ENCODE measurements at regions of chr5 and their contacts with region 1.

Region 1: GRCh38 chr5:55172051-55172899 is 702 bp downstream of the CDC20B start:
- DNase-seq: peak; percentile 75
- H3K4me3 Mint-ChIP-seq: peak overlapping the region; percentile 80
- H3K27ac Mint-ChIP-seq: no peak overlapping the region
- H3K4me1 Mint-ChIP-seq: peaks cover 39% of the 10 kb centered on the region
- H3K27me3 Mint-ChIP-seq: peaks cover 60% of the 10 kb centered on the region

Region 2: DNA sequence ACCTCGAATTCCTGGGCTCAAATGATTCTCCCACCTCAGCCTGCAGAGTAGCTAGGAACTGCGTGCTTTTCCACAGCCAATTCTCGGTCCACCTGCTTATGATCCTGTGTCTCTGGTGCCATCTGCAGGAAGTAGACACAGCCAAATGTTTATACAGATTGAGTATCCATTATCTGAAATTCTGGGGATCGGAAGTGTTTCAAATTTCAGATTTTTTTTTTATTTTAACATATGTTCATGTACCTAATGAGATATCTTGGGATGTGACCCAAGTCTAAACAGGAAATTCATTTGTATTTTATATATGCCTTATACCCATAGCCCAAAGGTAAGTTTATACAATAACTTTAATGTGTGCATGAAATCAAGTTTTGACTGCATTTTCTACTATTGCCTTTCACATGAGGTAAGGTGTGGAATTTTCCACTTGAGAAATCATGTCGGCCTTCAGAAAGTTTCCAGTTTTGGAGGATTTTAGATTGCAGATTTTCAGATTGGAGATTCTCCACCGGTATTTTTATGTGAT is 276.4 kb before region 1 on chr5:
- CTCF ChIA-PET with region 1: no interaction called
- POLR2A ChIA-PET with region 1: no interaction called
- intact Hi-C with region 1: no loop called
- DNase-seq: no peak
- H3K4me3 Mint-ChIP-seq: no peak overlapping the region
- H3K27ac Mint-ChIP-seq: no peak overlapping the region
- H3K4me1 Mint-ChIP-seq: peaks cover 5% of the 10 kb centered on the region
- H3K27me3 Mint-ChIP-seq: peaks cover 54% of the 10 kb centered on the region

Region 3: DNA sequence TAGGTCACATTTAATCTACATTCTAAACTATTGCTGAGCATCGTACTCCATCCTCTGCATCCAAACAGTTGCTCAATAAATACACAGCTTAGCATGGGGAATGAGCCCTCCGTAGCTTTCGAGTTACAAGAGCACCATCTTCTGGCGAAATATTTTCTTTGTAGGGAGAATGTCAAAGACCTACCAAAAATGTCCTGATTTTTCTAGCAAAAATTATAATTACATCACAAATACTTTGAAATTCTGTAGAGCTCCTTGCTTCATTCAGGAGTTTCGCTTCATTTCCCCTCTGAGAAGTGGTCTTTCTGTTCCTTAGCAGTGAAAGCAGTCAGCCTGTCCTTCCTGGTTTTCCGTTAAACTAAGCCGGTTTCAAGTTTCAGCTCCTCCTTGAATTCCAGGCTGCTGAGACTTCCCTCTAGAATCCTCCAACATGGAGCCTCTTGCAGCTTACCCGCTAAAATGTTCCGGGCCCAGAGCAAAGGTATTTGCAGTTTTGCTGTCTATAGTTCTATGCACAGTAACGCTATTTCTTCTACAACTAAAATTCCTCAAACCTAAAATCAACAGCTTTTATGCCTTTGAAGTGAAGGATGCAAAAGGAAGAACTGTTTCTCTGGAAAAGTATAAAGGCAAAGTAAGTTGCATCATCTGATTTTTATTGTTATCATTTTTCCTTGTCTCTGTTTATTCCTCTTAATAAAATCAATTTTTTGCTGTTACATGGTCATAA is 12.3 kb before region 1 on chr5 and contains the start of gene GPX8:
- CTCF ChIA-PET with region 1: interaction called, 17 read pairs
- POLR2A ChIA-PET with region 1: no interaction called
- intact Hi-C with region 1: no loop called
- DNase-seq: no peak
- H3K4me3 Mint-ChIP-seq: no peak within 1 kb of the TSS
- H3K27ac Mint-ChIP-seq: no peak within 1 kb of the TSS
- H3K4me1 Mint-ChIP-seq: no peaks in the 10 kb centered on the region
- H3K27me3 Mint-ChIP-seq: peaks cover 16% of the 10 kb centered on the region
- total RNA-seq, gene GPX8: not detected

Region 4: GRCh38 chr5:55226027-55226933 is 54.0 kb after region 1 on chr5:
- CTCF ChIA-PET with region 1: interaction called, 22 read pairs
- POLR2A ChIA-PET with region 1: no interaction called
- intact Hi-C with region 1: loop called (anchors 1 kb)
- DNase-seq: peak; percentile 82
- H3K4me3 Mint-ChIP-seq: peak overlapping the region; percentile 30
- H3K27ac Mint-ChIP-seq: no peak overlapping the region
- H3K4me1 Mint-ChIP-seq: peaks cover 30% of the 10 kb centered on the region
- H3K27me3 Mint-ChIP-seq: peaks cover 84% of the 10 kb centered on the region

Region 5: DNA sequence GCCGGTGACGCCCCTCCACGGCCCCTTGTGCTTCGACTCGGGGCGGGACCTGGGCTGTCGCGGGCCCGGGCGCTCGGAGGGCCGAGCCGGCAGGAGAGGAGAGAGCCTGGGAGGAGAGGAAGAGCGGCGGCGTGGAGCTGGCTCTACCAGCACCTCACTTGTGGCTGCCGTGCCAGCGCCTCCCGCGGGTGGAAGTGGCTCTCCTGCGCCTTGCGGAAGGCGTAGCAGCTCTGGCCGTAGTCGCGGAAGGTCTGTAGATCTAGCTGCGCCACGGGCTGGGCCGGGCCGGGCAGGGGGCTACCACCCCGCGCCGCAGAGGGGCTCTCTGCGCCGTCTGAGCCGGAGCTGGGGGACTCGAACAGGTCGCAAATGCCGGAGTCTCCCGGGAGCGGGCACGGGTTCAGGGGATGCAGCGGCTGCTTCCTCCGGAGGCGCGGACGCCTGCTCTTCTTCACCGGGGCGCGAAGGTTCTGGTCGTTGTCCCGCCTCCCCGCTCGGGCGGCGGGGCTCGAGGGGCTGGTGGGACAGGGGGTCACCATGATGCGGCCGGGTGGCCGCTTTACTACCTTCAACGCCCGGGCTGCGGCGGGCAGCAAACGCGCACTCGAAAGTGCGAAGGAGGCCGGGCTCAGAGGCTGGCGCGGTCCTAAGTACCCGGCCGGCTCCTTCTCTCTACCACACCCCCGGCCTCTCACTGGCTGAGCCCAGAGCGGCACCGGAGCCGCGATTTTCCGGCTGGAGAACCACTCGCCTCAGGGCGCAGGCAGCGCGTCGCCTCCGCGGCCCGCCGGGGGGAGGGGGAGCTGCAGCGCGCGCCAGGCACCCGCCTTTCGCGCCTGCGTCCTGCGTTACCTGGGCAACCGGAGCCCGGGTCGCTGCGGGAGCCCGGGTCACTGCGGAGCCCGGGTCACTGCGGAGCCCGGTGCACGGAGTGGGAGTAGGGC is 61.0 kb after region 1 on chr5 and contains the start of gene CCNO:
- CTCF ChIA-PET with region 1: interaction called, 22 read pairs
- POLR2A ChIA-PET with region 1: no interaction called
- intact Hi-C with region 1: loop called (anchors 1 kb)
- DNase-seq: peak; percentile 71
- H3K4me3 Mint-ChIP-seq: peak within 1 kb of the TSS; percentile 74
- H3K27ac Mint-ChIP-seq: no peak within 1 kb of the TSS
- H3K4me1 Mint-ChIP-seq: peaks cover 31% of the 10 kb centered on the region
- H3K27me3 Mint-ChIP-seq: peaks cover 70% of the 10 kb centered on the region
- total RNA-seq, gene CCNO: not detected

Region 6: DNA sequence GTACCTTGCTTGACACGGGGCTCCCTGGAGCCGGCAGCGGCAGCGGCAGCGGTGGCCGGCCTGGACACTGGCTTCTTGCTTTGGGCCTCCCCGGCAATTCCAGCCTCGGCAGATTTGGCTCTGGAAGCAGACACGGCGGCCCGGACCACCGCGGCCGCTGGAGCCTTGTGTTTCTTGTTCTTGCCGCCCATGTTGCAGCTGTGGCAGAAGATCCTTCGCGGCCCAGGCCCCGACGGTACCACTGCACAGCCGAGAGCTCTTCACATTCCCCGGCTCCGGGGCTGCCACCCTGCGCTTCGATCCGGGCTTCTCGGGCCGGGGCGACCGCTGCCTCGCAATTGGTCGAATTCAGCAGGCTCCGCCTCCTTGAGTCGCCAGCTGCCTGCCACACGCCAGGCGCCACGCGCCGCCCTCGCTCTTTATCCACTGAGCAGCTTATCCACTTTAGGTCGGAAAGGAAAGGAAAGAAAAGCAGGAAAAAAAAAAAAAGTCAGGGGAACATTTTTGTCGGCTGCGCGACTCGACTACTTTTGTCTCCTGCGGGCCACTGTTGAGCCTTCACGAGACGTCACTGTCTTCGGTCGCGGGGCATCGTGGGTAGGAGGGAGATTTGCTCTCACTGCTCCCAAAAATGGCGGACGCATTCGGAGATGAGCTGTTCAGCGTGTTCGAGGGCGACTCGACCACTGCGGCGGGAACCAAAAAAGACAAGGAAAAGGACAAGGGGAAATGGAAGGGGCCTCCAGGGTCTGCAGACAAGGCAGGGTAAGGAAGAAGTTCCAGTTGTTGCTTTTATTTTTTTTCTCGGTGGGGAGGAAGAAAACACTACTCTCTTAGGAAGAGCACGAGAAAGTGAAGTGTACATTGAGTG is 135.3 kb after region 1 on chr5 and contains the starts of genes DHX29 and MTREX:
- CTCF ChIA-PET with region 1: interaction called, 3 read pairs
- POLR2A ChIA-PET with region 1: interaction called, 6 read pairs
- intact Hi-C with region 1: loop called (anchors 1 kb)
- DNase-seq: peak; percentile 92
- H3K4me3 Mint-ChIP-seq: no peak within 1 kb of the TSS
- H3K27ac Mint-ChIP-seq: no peak within 1 kb of the TSS
- H3K4me1 Mint-ChIP-seq: peaks cover 32% of the 10 kb centered on the region
- H3K27me3 Mint-ChIP-seq: no peaks in the 10 kb centered on the region
- total RNA-seq, gene DHX29: 11.5 to 11.8 TPM
- total RNA-seq, gene MTREX: 87.4 to 96.6 TPM

Region 7: GRCh38 chr5:55534436-55535198 is 362.3 kb after region 1 on chr5 and contains the start of gene PLPP1:
- CTCF ChIA-PET with region 1: no interaction called
- POLR2A ChIA-PET with region 1: no interaction called
- intact Hi-C with region 1: loop called (anchors 5 kb)
- DNase-seq: peak; percentile 89
- H3K4me3 Mint-ChIP-seq: peak within 1 kb of the TSS; percentile 85
- H3K27ac Mint-ChIP-seq: peak within 1 kb of the TSS; percentile 77
- H3K4me1 Mint-ChIP-seq: peaks cover 24% of the 10 kb centered on the region
- H3K27me3 Mint-ChIP-seq: no peaks in the 10 kb centered on the region
- total RNA-seq, gene PLPP1: 6.7 to 7.2 TPM

Region 8: DNA sequence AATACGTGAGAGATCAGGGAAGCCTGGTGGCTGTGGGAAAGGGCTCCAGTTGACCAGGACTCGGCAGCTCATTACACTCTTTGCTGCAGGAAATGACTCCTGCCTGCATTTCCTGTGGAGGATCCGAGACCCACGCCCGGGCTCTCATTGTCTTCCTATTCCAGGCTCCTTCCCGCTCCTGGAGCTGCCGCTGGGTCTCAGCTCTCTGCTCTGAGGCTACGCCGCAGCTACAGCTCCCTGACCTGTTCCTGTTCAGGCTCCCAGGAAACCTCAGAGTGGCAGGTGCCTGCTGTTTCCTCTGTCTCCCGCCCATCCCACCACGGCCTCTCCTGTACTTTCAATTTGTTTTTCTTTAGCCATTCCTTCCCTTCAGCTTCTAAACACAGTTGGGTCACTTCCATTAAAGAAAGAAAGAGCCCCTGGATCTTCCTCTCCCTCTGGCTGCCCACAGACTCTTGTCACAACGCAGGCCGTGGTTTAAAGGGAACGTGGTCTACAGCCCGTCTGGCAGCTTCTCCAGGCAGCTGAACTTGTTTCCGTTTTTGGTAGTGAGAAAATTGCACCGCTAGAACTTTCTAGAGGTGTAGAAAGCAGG is 751.0 kb after region 1 on chr5:
- CTCF ChIA-PET with region 1: no interaction called
- POLR2A ChIA-PET with region 1: no interaction called
- intact Hi-C with region 1: loop called (anchors 10 kb)
- DNase-seq: peak; percentile 34
- H3K4me3 Mint-ChIP-seq: peak overlapping the region; percentile 77
- H3K27ac Mint-ChIP-seq: no peak overlapping the region
- H3K4me1 Mint-ChIP-seq: peaks cover 23% of the 10 kb centered on the region
- H3K27me3 Mint-ChIP-seq: no peaks in the 10 kb centered on the region